ENCODE measurements at regions of chr12 and their contacts with region 1.

Region 1: DNA sequence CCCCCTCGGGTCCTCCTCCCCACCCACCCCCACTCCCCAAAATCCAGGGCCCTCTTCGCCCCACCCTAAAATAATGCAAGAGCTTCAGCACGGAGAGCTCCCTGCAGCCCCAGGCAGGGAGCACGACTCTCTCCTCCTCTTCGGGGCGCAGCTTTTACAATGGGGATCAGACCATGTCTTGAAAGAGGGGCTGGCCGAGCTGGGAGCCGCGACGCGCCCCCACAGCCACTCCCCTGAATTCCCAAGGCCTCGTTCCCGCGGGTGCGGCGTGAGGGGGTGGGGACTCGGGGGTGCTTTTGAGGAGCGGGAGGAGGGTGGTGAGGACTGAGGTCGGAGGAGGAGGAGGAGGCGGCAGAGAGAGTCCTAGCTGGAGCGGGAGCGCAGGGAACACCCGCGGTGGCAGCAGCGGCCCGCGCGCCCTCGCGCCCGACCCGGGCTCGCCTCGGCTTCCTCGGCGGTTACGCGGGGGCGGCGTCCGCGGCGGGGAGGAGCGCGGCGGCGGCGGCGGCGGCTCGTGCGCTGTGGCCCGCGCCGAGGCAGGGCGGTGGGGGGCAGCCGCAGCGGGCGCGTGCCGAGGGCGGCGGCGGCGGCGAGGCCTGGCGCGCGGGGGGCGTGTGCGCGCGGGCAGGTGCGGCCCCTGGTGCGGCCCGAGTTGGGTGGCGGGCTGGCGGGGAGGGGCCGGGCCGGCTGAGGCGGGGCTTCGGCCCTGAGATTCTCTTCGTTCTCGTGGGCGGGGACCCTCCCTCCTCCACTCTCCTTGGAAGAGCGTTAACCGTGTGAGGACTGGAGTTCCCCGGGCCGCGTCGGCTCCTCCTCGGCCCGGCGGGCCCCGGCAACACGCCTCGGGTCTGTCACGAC is at the start of gene ANKS1B:
- DNase-seq: peak; percentile 55 to 70
- ATAC-seq: peak; percentile 76 to 83 (median 80)
- H3K4me3 ChIP-seq: peak within 1 kb of the TSS; percentile 71
- H3K27ac ChIP-seq: peak within 1 kb of the TSS; percentile 57
- H3K4me1 ChIP-seq: peaks cover 2% of the 10 kb centered on the region
- H3K27me3 ChIP-seq: peaks cover 0 to 17% (median 0%) of the 10 kb centered on the region in 3 donors
- CTCF ChIP-seq: no peak
- total RNA-seq, gene ANKS1B: 3.6 to 7.4 (median 4.2) TPM

Region 2: GRCh38 chr12:99810718-99811593 is 173.5 kb before region 1 on chr12:
- intact Hi-C with region 1: loop called in 1 of 2 experiments (anchors 10 kb)
- DNase-seq: no peak
- ATAC-seq: no peak
- H3K4me3 ChIP-seq: no peak overlapping the region
- H3K27ac ChIP-seq: no peak overlapping the region
- H3K4me1 ChIP-seq: no peaks in the 10 kb centered on the region
- H3K27me3 ChIP-seq: no peaks in the 10 kb centered on the region
- CTCF ChIP-seq: peak; percentile 36

Measured in psoas muscle (tissue), 8 donors.